ENCODE measurements at regions of chr2 and their contacts with region 1.

Region 1: GRCh38 chr2:27050281-27050995 is 1.0 kb upstream of the AGBL5 start:
- DNase-seq: peak; percentile 98
- ATAC-seq: peak; percentile 83
- H3K4me3 ChIP-seq: peak overlapping the region; percentile 78
- H3K27ac ChIP-seq: peak overlapping the region; percentile 27
- H3K4me1 ChIP-seq: peaks cover 5% of the 10 kb centered on the region
- H3K27me3 ChIP-seq: no peaks in the 10 kb centered on the region
- CTCF ChIP-seq: peak; percentile 41
- POLR2A ChIP-seq: peak; percentile 98
- RAD21 ChIP-seq: no peak; the same call in 1 of the 2 replicates

Region 2: DNA sequence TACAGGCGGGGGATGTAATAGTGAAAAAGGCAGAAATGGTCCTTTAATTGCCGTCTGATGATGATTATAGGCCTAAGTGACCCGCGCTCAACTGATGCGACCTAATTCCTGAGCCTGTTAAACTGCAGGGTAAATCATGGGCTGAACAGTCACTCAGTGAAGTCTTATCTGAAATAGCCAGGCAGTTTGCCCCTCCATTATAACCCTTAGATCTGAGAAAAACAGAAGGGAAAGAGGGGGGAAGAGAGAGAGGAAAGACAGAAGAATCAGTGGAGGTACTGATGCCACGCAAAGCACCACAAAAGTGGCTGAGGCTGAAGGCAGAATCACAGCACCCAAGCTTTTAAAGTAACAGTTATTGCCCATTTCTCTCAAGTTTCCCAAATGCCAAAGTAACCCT is 1635.7 kb before region 1 on chr2:
- CTCF ChIA-PET with region 1: no interaction called
- POLR2A ChIA-PET with region 1: interaction called, 10 read pairs
- dilution Hi-C with region 1: no loop called
- in situ Hi-C with region 1: no loop called
- intact Hi-C with region 1: no loop called
- DNase-seq: no peak
- ATAC-seq: no peak
- H3K4me3 ChIP-seq: no peak overlapping the region
- H3K27ac ChIP-seq: no peak overlapping the region
- H3K4me1 ChIP-seq: no peaks in the 10 kb centered on the region
- H3K27me3 ChIP-seq: no peaks in the 10 kb centered on the region
- CTCF ChIP-seq: no peak
- POLR2A ChIP-seq: no peak
- RAD21 ChIP-seq: no peak

Region 3: DNA sequence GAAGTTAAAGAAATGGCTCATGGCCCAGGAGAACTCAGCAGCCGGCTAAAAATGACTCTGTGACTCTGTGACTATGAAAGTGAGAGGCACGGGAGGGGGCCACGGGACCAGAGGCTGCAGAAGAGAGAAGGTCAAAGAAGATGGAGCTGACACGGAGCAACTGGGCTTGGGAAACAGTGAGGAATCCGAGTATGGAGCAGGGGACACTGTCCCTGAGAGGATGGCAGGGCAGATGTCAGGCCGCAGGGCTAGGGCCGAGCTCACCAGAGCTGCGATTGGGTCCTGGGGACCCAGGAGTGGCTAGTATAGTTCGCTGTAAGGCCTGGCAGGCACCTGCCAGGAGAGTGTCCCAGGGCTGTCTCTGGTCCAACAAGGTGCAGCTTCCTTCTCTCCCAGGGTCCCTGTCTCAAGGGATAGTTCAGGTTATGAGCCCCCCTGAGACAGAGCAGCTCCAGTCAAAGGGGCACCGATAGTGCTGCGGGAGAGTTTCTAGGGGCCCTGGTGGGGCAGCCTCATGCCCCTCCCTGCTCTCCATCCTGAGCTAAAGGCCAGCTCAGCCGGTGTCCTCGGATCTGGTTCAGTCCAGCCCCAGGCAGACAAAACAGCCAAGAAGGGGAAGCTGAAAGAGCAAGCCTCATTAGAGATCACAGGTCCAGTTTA is 452.0 kb before region 1 on chr2:
- CTCF ChIA-PET with region 1: no interaction called
- POLR2A ChIA-PET with region 1: no interaction called
- dilution Hi-C with region 1: no loop called
- in situ Hi-C with region 1: no loop called
- intact Hi-C with region 1: no loop called
- DNase-seq: no peak
- ATAC-seq: no peak
- H3K4me3 ChIP-seq: no peak overlapping the region
- H3K27ac ChIP-seq: no peak overlapping the region
- H3K4me1 ChIP-seq: no peaks in the 10 kb centered on the region
- H3K27me3 ChIP-seq: peaks cover 33% of the 10 kb centered on the region
- CTCF ChIP-seq: no peak
- POLR2A ChIP-seq: no peak
- RAD21 ChIP-seq: no peak

Region 4: DNA sequence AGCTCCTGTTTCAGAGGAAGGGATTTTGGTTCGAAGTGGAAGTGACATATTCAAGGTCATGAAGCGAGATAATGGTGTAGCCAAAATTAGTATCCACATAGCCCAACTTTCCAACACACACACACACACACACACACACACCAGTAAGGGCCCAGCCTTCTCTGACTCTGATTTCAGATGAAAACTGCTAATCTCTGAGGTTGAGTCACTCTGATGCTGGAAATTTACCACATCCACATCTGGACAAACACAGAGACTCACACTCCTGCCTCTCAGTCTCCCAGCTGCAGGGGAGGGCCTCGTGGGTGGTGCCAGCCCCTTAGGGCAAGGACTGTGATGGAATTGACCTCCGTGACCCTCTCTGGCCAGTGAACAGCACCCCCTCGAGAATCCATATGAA is 315.3 kb before region 1 on chr2:
- CTCF ChIA-PET with region 1: no interaction called
- POLR2A ChIA-PET with region 1: no interaction called
- dilution Hi-C with region 1: no loop called
- in situ Hi-C with region 1: no loop called
- intact Hi-C with region 1: no loop called
- DNase-seq: peak; percentile 96
- ATAC-seq: peak; percentile 93
- H3K4me3 ChIP-seq: no peak overlapping the region
- H3K27ac ChIP-seq: no peak overlapping the region
- H3K4me1 ChIP-seq: no peaks in the 10 kb centered on the region
- H3K27me3 ChIP-seq: peaks cover 23% of the 10 kb centered on the region; the same call in 1 of the 2 replicates
- CTCF ChIP-seq: no peak
- POLR2A ChIP-seq: no peak
- RAD21 ChIP-seq: no peak

Region 5: DNA sequence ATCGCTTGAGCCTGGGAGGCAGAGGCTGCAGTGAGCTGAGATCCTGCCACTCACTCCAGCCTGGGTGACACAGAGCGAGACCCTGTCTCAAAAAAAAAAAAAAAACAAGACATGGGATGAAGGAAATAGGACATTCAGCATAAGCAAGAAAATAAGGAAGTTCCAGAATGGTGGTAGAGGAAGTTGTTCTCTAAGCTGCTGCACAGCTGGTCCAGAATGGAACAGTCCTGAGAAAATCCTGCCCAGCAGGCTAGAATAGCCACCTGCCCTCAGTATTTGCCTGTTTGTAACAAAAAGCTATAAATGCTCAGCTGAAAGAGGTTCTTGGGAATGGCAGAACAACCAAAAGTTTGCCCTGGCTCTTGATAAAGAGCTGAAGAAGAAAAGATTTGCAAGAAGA is 91.1 kb before region 1 on chr2:
- CTCF ChIA-PET with region 1: interaction called, 4 read pairs
- POLR2A ChIA-PET with region 1: no interaction called
- dilution Hi-C with region 1: no loop called
- in situ Hi-C with region 1: no loop called
- intact Hi-C with region 1: loop called (anchors 1 kb)
- DNase-seq: no peak
- ATAC-seq: no peak
- H3K4me3 ChIP-seq: no peak overlapping the region
- H3K27ac ChIP-seq: no peak overlapping the region
- H3K4me1 ChIP-seq: no peaks in the 10 kb centered on the region
- H3K27me3 ChIP-seq: peaks cover 41% of the 10 kb centered on the region
- CTCF ChIP-seq: no peak
- POLR2A ChIP-seq: no peak
- RAD21 ChIP-seq: no peak

Region 6: DNA sequence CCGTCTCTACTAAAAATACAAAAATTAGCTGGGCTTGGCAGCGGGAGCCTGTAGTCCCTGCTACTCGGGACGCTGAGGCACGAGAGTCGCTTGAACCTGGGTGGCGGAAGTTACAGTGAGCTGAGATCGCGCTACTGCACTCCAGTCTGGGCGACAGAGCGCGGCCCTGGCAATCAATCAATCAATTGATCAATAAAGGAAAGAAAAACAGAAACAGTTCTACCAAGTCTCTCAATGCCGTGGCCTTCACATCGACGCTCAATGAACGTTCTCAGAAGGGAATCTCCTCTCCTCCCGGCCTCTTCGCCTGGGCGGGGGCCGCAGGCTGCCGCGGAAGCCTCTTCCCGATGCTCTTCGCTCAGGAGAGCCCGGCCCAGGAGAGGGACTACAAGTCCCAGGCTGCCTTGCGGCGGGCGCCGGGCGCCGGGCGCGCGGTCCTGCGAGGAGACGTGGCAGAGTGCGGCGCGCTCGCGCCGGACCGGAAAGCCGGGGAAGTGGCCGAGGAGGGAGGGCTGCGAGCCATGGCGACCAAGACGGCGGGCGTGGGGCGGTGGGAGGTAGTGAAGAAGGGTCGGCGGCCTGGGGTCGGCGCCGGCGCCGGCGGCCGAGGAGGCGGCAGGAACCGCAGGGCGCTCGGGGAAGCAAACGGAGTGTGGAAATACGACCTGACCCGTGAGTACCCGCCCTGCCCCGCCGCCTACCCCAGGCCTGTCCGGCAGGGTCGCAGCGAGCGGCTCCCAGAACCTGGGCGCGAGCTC is 17.8 kb before region 1 on chr2 and contains the start of gene TMEM214:
- CTCF ChIA-PET with region 1: no interaction called
- POLR2A ChIA-PET with region 1: interaction called, 10 read pairs
- dilution Hi-C with region 1: no loop called
- in situ Hi-C with region 1: no loop called
- intact Hi-C with region 1: loop called (anchors 1 kb)
- DNase-seq: peak; percentile 89
- ATAC-seq: peak; percentile 96
- H3K4me3 ChIP-seq: peak within 1 kb of the TSS; percentile 94
- H3K27ac ChIP-seq: peak within 1 kb of the TSS; percentile 90
- H3K4me1 ChIP-seq: peaks cover 7% of the 10 kb centered on the region
- H3K27me3 ChIP-seq: no peaks in the 10 kb centered on the region
- CTCF ChIP-seq: no peak
- POLR2A ChIP-seq: peak; percentile 96
- RAD21 ChIP-seq: no peak
- total RNA-seq, gene TMEM214: 31.7 and 32.1 TPM in 2 replicates

Region 7: GRCh38 chr2:27071277-27071989 is 21.0 kb after region 1 on chr2 and contains the start of gene OST4:
- CTCF ChIA-PET with region 1: no interaction called
- POLR2A ChIA-PET with region 1: no interaction called
- dilution Hi-C with region 1: no loop called
- in situ Hi-C with region 1: no loop called
- intact Hi-C with region 1: loop called (anchors 2 kb)
- DNase-seq: peak; percentile 92
- ATAC-seq: peak; percentile 92
- H3K4me3 ChIP-seq: peak within 1 kb of the TSS; percentile 86
- H3K27ac ChIP-seq: peak within 1 kb of the TSS; percentile 97
- H3K4me1 ChIP-seq: peaks cover 34% of the 10 kb centered on the region
- H3K27me3 ChIP-seq: no peaks in the 10 kb centered on the region
- CTCF ChIP-seq: no peak
- POLR2A ChIP-seq: peak; percentile 92
- RAD21 ChIP-seq: no peak
- total RNA-seq, gene OST4: 196 and 386 TPM in 2 replicates

Region 8: DNA sequence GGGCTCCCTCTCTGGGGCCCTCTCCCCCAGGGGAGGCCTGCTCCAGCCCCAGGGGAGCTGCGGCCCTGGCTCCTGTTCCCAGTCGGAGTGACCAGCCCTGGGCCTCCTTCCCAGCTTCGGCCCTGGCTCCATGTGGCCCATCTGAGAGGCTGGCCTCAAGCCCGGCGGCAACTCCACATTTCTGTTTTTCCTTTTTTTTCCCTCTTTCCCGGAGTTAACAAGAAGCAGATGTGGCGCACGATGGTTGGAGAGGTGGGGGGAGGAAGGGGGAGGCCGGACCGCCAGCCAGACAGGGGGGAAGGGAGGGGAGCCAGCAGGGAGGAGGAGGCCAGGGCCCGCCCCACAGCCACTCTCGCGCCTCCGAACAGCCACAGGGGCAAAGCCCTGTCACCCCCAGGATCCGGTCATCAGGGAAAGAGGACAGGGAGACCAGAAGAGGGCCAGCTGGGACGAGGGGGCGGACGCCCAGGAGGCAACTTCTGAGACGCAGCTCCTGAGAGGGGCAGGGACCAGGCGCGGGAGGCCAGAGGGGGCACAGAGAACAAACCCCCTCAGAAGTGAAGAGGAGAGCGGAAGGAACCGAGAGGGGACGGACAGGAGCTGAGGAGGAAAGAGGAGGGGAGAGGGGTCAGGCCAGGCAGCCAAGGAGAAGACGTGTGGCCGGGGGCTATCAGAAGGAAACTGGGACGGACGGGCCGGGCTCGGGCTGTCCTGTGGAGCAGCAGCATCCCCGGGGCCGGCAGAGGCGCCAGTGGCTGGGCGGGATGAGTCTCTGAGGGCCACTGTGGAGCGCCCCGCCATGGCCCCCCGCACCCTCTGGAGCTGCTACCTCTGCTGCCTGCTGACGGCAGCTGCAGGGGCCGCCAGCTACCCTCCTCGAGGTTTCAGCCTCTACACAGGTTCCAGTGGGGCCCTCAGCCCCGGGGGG is 28.1 kb after region 1 on chr2 and contains the start of gene EMILIN1:
- CTCF ChIA-PET with region 1: interaction called, 3 read pairs
- POLR2A ChIA-PET with region 1: no interaction called
- dilution Hi-C with region 1: no loop called
- in situ Hi-C with region 1: no loop called
- intact Hi-C with region 1: loop called (anchors 1 kb)
- DNase-seq: peak; percentile 96
- ATAC-seq: peak; percentile 80
- H3K4me3 ChIP-seq: peak within 1 kb of the TSS; percentile 82
- H3K27ac ChIP-seq: peak within 1 kb of the TSS; percentile 98
- H3K4me1 ChIP-seq: peaks cover 30% of the 10 kb centered on the region
- H3K27me3 ChIP-seq: no peaks in the 10 kb centered on the region
- CTCF ChIP-seq: no peak
- POLR2A ChIP-seq: peak; percentile 47; the same call in 1 of the 2 replicates
- RAD21 ChIP-seq: no peak
- total RNA-seq, gene EMILIN1: 26.5 and 27.8 TPM in 2 replicates

Region 9: DNA sequence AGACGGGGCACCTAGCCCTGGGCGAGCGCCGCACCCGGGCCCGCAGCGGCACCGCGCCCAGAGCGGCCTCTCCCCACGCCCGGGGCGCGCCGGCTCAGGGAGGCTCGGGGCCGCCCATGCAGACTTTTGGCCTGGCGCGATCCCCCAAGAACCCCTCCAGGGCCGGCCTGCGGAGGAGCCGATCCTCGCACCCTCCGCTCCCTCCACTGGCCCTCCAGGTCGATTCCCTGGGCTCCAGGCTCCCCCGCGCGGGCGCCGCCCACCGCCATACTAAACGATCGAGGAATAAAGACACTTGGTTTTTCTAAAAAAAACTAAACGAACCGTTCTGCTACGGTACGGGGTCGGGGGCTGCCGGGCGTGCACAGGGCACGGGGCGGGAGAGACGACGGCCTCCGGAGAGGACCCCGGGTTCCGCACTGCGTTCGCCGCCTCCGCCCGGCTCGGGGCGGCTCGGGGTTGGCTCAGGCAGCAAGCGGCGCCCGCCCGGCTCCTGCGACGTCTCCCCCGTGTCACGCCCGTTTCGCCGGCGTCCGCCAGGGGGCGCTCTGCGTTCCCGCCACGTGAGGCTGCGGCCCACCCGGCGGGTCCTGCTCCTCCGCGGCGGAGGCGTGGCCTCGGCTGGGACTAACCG is 35.8 kb after region 1 on chr2:
- CTCF ChIA-PET with region 1: interaction called, 3 read pairs
- POLR2A ChIA-PET with region 1: no interaction called
- dilution Hi-C with region 1: no loop called
- in situ Hi-C with region 1: no loop called
- intact Hi-C with region 1: loop called (anchors 1 kb)
- DNase-seq: peak; percentile 86
- ATAC-seq: peak; percentile 87
- H3K4me3 ChIP-seq: peak overlapping the region; percentile 40
- H3K27ac ChIP-seq: peak overlapping the region; percentile 64
- H3K4me1 ChIP-seq: peaks cover 8% of the 10 kb centered on the region
- H3K27me3 ChIP-seq: no peaks in the 10 kb centered on the region
- CTCF ChIP-seq: peak; percentile 93
- POLR2A ChIP-seq: no peak
- RAD21 ChIP-seq: peak; percentile 53

Region 10: DNA sequence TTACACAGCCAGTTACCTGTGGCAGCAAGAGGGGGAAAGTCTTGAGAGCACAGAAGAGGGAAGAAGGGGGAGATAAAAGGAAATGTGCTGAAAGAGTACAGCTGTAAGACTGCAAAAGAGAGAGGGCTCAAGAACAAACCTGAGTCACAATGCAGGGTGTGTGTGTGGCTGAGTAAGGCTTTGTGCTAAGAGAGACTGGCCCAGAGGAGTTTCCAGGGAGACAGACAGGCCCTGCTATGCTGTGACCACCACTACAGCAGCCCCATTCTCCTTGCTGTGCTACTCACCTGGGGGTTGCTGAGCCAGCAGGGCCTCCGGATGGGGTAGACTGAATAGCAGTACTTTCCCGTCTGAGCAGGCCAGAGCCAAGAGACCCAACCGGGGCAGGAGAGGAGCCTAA is 284.9 kb after region 1 on chr2:
- CTCF ChIA-PET with region 1: no interaction called
- POLR2A ChIA-PET with region 1: no interaction called
- dilution Hi-C with region 1: no loop called
- in situ Hi-C with region 1: no loop called
- intact Hi-C with region 1: no loop called
- DNase-seq: no peak
- ATAC-seq: no peak
- H3K4me3 ChIP-seq: no peak overlapping the region
- H3K27ac ChIP-seq: no peak overlapping the region
- H3K4me1 ChIP-seq: no peaks in the 10 kb centered on the region
- H3K27me3 ChIP-seq: no peaks in the 10 kb centered on the region
- CTCF ChIP-seq: no peak
- POLR2A ChIP-seq: no peak
- RAD21 ChIP-seq: no peak

Measured in IMR-90 (cell line).